Motor neuron (in vitro differentiated cells): ENCODE measurements at regions of chrX and their contacts with region 1.

Region 1: DNA sequence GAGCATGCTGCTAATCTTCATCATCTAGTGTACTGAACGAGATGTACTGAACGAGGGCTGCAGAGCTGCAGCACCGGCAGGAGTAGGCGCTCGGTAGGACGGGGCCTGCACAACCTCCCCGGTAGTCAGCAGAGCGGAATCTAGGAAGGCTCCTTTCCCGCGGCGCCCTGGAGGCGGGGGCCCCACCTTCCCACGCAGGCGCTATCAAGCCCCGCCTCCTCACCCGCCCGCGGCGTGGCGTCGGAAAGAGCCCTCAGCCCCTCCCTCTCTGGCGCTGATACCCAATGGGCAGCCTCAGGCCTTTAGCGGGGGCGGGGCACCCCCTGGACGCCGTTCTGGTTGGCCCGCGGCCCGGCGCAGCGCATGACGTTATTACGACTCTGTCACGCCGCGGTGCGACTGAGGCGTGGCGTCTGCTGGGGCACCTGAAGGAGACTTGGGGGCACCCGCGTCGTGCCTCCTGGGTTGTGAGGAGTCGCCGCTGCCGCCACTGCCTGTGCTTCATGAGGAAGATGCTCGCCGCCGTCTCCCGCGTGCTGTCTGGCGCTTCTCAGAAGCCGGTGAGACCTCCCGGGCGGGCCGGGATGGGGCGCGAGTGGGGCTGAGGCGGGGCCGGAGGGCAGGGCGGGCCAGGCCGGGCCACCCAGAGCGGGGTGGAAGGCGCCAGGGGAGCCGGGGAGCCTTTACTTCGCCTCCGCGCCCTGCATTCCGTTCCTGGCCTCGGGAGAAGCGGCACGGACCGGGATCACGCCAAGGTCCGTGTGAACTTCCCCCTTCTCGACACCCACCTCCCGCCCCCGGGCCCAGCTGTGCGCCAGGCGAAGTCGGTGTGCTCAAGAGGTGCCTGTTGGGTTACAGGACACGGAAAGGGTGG is at the start of gene PDHA1:
- ATAC-seq: peak; percentile 93 to 98 (median 97)
- H3K4me3 ChIP-seq: peak within 1 kb of the TSS; percentile 76 to 94 (median 82)
- H3K27ac ChIP-seq: peak within 1 kb of the TSS; percentile 75 to 86
- H3K4me1 ChIP-seq: peaks cover 0 to 2% of the 10 kb centered on the region in 2 donors
- total RNA-seq, gene PDHA1: 72.2 to 249 (median 95.3) TPM

Region 2: GRCh38 chrX:18390941-18391538 is 952.7 kb before region 1 on chrX:
- in situ Hi-C with region 1: loop called in 7 of 9 experiments (anchors 10 to 25 kb)
- ATAC-seq: no peak
- H3K4me3 ChIP-seq: no peak overlapping the region
- H3K27ac ChIP-seq: no peak overlapping the region
- H3K4me1 ChIP-seq: no peaks in the 10 kb centered on the region

Region 3: GRCh38 chrX:18424482-18425198 is 919.1 kb before region 1 on chrX:
- in situ Hi-C with region 1: loop called in 1 of 9 experiments (anchors 25 kb)
- ATAC-seq: peak in 5 of 8 experiments; percentile 51 to 61 (median 58)
- H3K4me3 ChIP-seq: peak overlapping the region; percentile 55 to 96 (median 83)
- H3K27ac ChIP-seq: peak overlapping the region; percentile 30 to 78
- H3K4me1 ChIP-seq: peaks cover 0 to 15% of the 10 kb centered on the region in 2 donors

Region 4: DNA sequence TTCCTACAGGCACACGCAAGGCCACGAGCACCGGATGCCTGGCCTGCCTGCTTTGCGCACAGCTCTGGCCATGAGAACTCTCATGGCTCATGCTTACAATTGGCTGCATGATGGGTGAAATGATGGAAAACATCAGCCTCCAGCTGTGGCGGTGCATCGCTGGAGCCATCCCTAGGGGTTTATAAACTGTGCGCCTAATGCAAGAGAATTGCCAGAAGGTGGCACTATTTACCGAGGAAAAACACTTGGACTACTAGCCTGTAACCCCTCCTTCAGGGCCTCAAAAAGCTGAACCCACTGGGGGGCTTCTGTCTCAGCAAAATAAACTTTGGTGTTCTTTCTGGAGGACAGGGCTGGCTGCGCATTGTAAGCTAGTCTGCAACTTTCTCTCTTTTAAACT is 411.8 kb before region 1 on chrX:
- in situ Hi-C with region 1: loop called in 1 of 9 experiments (anchors 25 kb)
- ATAC-seq: peak in 5 of 8 experiments; percentile 22 to 38 (median 29)
- H3K4me3 ChIP-seq: no peak overlapping the region
- H3K27ac ChIP-seq: no peak overlapping the region
- H3K4me1 ChIP-seq: no peaks in the 10 kb centered on the region

Region 5: GRCh38 chrX:19040373-19040772 is 303.4 kb before region 1 on chrX:
- in situ Hi-C with region 1: loop called in 1 of 9 experiments (anchors 25 kb)
- ATAC-seq: no peak
- H3K4me3 ChIP-seq: no peak overlapping the region
- H3K27ac ChIP-seq: no peak overlapping the region
- H3K4me1 ChIP-seq: no peaks in the 10 kb centered on the region

Region 6: GRCh38 chrX:19532709-19533108 is 188.9 kb after region 1 on chrX:
- in situ Hi-C with region 1: no loop called
- ATAC-seq: no peak
- H3K4me3 ChIP-seq: no peak overlapping the region
- H3K27ac ChIP-seq: no peak overlapping the region
- H3K4me1 ChIP-seq: no peaks in the 10 kb centered on the region